PC-9 (cell line): ENCODE measurements at regions of chr11 and their contacts with region 1.

Region 1: DNA sequence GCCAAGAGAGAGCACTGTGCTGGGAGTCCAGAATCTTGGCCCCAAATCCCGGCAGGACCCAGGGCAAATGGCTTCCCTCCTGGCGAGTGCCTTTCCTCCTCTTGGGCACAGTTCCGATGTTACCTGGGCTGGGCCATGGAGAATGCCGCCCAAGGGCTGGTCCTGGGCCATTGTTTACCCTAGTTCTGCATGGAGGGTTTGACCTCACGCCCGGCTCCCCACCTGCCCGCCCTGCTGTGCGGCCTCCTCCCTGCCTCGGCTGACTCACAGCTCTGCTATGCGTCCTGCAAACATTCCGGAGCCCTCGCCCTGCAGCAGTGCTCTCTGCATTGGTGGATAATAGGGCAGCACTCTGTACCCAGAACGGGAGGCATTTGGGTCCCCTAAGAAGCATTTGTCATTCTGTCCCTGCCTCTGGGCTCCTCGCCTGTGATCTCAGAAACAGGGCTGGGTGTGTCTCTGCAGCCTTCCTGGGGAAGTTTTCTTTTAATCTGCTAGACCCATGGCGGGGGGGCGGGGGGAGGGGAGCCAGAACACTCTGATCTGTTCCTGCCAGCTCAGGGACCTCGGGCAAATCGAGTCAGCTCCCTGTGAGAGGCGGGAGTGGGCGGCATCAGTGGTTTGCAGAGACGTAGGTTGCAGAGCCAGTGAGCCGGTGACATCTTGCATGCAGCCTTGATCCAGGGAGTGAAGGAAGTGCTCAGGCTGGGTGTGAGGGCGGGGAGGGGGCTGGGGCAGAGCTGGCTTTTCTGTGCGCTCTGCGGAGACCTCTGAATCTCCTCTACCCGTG is 32.9 kb upstream of the SMIM38 start:
- DNase-seq: peak; percentile 99 to 100
- H3K4me3 ChIP-seq: peak overlapping the region; percentile 43; the same call in 1 of the 2 replicates
- H3K27ac ChIP-seq: peak overlapping the region; percentile 96
- H3K4me1 ChIP-seq: peaks cover 42% of the 10 kb centered on the region
- H3K27me3 ChIP-seq: no peaks in the 10 kb centered on the region
- CTCF ChIP-seq: no peak

Region 2: GRCh38 chr11:69048718-69049489 is 73.9 kb before region 1 on chr11 and contains the start of gene TPCN2:
- CTCF ChIA-PET with region 1: no interaction called
- POLR2A ChIA-PET with region 1: interaction called, 40 read pairs
- intact Hi-C with region 1: no loop called
- DNase-seq: peak; percentile 86 to 91
- H3K4me3 ChIP-seq: peak within 1 kb of the TSS; percentile 82
- H3K27ac ChIP-seq: no peak within 1 kb of the TSS
- H3K4me1 ChIP-seq: peaks cover 12% of the 10 kb centered on the region
- H3K27me3 ChIP-seq: no peaks in the 10 kb centered on the region
- CTCF ChIP-seq: no peak
- total RNA-seq, gene TPCN2: 24.8 and 26.4 TPM in 2 replicates

Region 3: GRCh38 chr11:69138265-69138664 is 15.4 kb after region 1 on chr11:
- CTCF ChIA-PET with region 1: no interaction called
- POLR2A ChIA-PET with region 1: no interaction called
- intact Hi-C with region 1: no loop called
- DNase-seq: peak; percentile 64 to 91
- H3K4me3 ChIP-seq: no peak overlapping the region
- H3K27ac ChIP-seq: peak overlapping the region; percentile 73
- H3K4me1 ChIP-seq: peaks cover 28% of the 10 kb centered on the region
- H3K27me3 ChIP-seq: no peaks in the 10 kb centered on the region
- CTCF ChIP-seq: no peak

Region 4: GRCh38 chr11:69280994-69281393 is 158.2 kb after region 1 on chr11:
- CTCF ChIA-PET with region 1: interaction called, 24 read pairs
- POLR2A ChIA-PET with region 1: interaction called, 8 read pairs
- intact Hi-C with region 1: loop called (anchors 1 kb)
- DNase-seq: peak; percentile 90 to 100
- H3K4me3 ChIP-seq: peak overlapping the region; percentile 28; the same call in 1 of the 2 replicates
- H3K27ac ChIP-seq: peak overlapping the region; percentile 99
- H3K4me1 ChIP-seq: peaks cover 85% of the 10 kb centered on the region
- H3K27me3 ChIP-seq: no peaks in the 10 kb centered on the region
- CTCF ChIP-seq: 0 out of 2 replicates have a peak, but pooled peaks have one; percentile 3

Region 5: DNA sequence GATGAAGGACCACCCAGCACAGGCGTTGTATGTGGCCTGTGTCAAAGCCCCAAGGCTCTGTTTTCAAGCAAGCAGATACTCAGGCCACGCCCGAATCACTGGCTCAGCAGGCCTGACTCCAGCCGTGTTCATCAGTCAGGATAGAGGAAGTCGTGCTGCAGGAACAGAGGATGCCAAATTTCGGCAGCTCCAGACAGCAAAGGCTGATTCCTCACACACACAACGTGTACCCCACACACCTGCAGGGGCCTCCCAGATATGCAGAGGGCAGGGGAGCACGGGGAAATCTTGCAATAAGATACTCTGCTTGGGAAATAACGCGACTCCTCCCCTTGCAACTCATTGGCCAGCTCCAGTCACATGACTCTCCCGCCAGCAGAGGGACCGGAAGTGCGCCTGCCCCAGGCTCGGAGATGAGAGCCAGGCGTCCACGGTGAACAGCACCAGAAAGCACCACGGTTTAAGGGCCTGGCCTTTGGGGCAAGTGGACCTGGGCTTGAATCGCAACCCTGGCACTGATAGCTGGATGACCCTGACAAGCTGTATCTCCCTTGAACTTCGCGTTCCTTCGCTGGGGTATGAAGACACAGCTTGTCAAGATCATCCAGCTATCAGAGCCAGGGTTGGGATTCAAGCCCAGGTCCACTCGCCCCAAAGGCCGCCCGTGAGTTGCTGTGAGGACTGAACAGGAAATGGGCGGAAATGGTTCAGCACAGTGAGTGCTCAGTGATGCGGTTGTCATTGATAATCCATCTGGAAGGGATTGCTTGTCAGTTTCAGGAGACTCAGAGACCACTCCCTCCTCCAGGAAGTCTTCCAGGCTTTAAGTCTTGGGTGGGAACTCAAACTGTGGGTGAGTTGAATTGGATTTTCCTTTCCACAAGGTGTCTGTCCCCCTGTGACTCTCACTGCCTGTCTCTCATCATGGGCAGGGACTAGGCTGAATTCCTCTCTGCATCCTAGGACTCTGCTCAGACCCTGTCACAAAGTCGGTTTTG is 259.6 kb after region 1 on chr11:
- CTCF ChIA-PET with region 1: no interaction called
- POLR2A ChIA-PET with region 1: no interaction called
- intact Hi-C with region 1: loop called (anchors 5 kb)
- DNase-seq: peak; percentile 82 to 88
- H3K4me3 ChIP-seq: peak overlapping the region; percentile 43; the same call in 1 of the 2 replicates
- H3K27ac ChIP-seq: peak overlapping the region; percentile 59
- H3K4me1 ChIP-seq: peaks cover 30% of the 10 kb centered on the region
- H3K27me3 ChIP-seq: no peaks in the 10 kb centered on the region
- CTCF ChIP-seq: no peak

Region 6: DNA sequence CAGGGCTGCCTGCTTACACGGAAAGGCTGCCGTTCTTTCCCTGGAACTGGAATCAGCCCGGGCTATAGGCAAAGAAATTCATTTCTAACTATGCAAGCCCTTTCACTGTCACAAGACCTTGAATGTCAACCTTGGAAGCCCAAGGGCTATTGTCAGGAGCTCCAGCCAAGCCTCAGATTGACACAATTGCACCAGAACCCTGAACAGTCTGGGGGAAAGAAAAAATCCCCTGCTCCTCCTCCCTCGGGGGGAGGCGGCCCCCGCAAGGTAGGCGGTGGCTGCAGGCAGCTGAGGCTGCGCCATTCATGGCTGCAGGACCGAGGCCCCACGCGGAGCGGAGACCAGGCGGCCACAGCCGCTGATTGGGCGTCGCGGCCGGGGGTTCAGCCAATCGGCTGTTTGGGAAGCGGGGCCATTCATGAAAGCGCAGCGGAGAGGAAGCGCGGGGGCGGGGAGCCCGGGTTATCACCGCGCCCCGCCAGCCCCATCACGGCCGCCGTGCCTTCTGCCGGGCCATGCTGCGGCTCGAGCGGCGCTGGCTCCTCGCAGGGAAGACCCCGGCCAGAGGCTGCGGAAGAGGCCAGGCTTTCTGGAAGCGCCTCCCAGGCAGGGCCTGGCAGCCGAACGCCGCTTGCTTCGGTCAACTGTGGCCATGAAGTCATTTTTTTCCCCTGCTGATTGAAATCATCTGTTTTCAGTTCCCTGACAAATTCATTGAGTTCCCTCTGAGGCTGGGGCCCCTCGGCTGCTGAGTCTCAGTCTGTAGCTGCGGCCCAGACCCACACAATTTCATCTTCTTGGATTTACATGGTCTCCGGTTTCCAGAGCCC is 320.5 kb after region 1 on chr11:
- CTCF ChIA-PET with region 1: no interaction called
- POLR2A ChIA-PET with region 1: no interaction called
- intact Hi-C with region 1: loop called (anchors 2 kb)
- DNase-seq: peak; percentile 90 to 97
- H3K4me3 ChIP-seq: peak overlapping the region; percentile 58
- H3K27ac ChIP-seq: peak overlapping the region; percentile 88
- H3K4me1 ChIP-seq: peaks cover 56% of the 10 kb centered on the region
- H3K27me3 ChIP-seq: no peaks in the 10 kb centered on the region
- CTCF ChIP-seq: no peak

Region 7: DNA sequence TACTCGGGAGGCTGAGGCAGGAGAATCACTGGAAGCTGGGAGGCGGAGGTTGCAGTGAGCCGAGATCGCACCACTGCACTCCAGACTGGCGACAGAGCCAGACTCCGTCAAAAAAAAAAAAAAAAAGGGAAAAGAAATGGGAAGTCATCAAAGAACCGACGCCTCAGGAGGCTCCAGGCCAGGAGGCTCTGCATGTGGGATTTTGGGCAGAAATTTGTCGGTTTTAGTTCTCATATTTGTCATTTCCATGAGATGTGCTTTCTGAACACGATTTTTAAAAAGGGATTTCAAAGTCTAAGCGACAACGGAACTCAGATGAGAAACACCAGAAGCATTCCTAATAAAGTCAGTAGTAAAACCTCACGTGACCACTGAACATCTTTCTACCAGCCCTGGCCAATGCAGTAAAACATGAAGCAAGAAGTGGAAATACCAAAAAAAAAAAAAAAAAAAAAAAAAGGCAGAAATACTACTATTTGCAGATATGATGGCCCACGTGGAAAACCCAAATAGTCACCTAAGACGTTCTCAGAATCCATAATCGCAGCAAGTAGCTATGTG is 553.1 kb after region 1 on chr11:
- CTCF ChIA-PET with region 1: interaction called, 11 read pairs
- POLR2A ChIA-PET with region 1: no interaction called
- intact Hi-C with region 1: no loop called
- DNase-seq: no peak
- H3K4me3 ChIP-seq: peak overlapping the region; percentile 96
- H3K27ac ChIP-seq: peak overlapping the region; percentile 51
- H3K4me1 ChIP-seq: peaks cover 30% of the 10 kb centered on the region
- H3K27me3 ChIP-seq: no peaks in the 10 kb centered on the region
- CTCF ChIP-seq: no peak